Gastrocnemius medialis (tissue), 4 donors: ENCODE measurements at regions of chr9 and their contacts with region 1.

Region 1: GRCh38 chr9:127715394-127716337 is at the starts of genes PTRH1 and TTC16:
- DNase-seq: peak; percentile 95 to 96
- ATAC-seq: peak; percentile 94 to 96
- H3K4me3 ChIP-seq: peak within 1 kb of the TSS; percentile 74 to 85 (median 78)
- H3K27ac ChIP-seq: peak within 1 kb of the TSS; percentile 84 to 86 (median 84)
- H3K4me1 ChIP-seq: peaks cover 12 to 14% of the 10 kb centered on the region in 2 donors
- H3K27me3 ChIP-seq: no peaks in the 10 kb centered on the region
- CTCF ChIP-seq: no peak
- POLR2A ChIP-seq: peak; percentile 71 to 78
- total RNA-seq, gene PTRH1: 16.9 to 38.6 (median 26.3) TPM
- total RNA-seq, gene TTC16: not detected

Region 2: GRCh38 chr9:127545196-127546124 is 170.2 kb before region 1 on chr9:
- in situ Hi-C with region 1: no loop called
- intact Hi-C with region 1: no loop called
- DNase-seq: no peak
- ATAC-seq: peak in 1 of 2 donors; percentile 13
- H3K4me3 ChIP-seq: no peak overlapping the region
- H3K27ac ChIP-seq: peak overlapping the region; percentile 31 to 53 (median 42)
- H3K4me1 ChIP-seq: peaks cover 20 to 31% of the 10 kb centered on the region in 2 donors
- H3K27me3 ChIP-seq: no peaks in the 10 kb centered on the region
- CTCF ChIP-seq: no peak
- POLR2A ChIP-seq: no peak

Region 3: DNA sequence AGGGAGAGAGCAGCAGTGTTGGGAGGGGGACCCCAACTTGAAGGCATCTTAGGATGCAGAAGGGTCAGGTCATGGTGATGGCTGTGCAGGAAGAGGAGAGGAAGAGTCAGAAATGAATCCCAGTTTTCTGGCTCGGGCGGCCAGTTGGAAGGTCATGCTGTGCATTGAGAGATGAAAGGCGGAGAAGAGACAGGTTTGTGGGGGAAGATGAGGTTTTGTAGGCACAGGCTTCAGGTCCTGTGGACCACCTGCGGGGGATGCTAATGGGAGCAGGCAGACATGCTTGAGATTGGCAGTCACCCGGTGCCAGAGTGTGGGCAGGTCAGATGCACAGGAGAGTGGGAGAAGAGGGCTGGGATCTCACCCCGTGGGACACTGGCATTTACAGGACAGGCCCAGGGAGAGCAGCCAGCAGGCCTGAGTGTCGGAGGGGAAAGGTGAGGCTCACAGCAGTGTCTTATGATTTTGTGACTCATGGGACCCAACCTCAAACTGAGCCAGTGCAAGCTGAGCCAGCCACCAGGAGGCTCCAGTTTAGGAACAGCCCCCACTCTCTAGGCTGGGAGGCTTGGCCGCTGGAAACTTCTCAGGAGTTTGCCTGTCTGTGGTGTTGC is 86.1 kb before region 1 on chr9:
- in situ Hi-C with region 1: no loop called
- intact Hi-C with region 1: no loop called
- DNase-seq: no peak
- ATAC-seq: no peak
- H3K4me3 ChIP-seq: no peak overlapping the region
- H3K27ac ChIP-seq: peak overlapping the region in 1 of 4 donors; percentile 5
- H3K4me1 ChIP-seq: peaks cover 14 to 22% of the 10 kb centered on the region in 2 donors
- H3K27me3 ChIP-seq: no peaks in the 10 kb centered on the region
- CTCF ChIP-seq: no peak
- POLR2A ChIP-seq: no peak

Region 4: GRCh38 chr9:127684576-127684975 is 31.1 kb before region 1 on chr9:
- in situ Hi-C with region 1: no loop called
- intact Hi-C with region 1: loop called (anchors 2 kb)
- DNase-seq: no peak
- ATAC-seq: no peak
- H3K4me3 ChIP-seq: no peak overlapping the region
- H3K27ac ChIP-seq: no peak overlapping the region
- H3K4me1 ChIP-seq: peaks cover 18 to 26% of the 10 kb centered on the region in 2 donors
- H3K27me3 ChIP-seq: no peaks in the 10 kb centered on the region
- CTCF ChIP-seq: no peak
- POLR2A ChIP-seq: no peak

Region 5: GRCh38 chr9:127698985-127699670 is 16.5 kb before region 1 on chr9:
- in situ Hi-C with region 1: no loop called
- intact Hi-C with region 1: loop called (anchors 1 kb)
- DNase-seq: peak; percentile 99
- ATAC-seq: peak; percentile 97 to 98
- H3K4me3 ChIP-seq: peak overlapping the region; percentile 36 to 49 (median 40)
- H3K27ac ChIP-seq: peak overlapping the region; percentile 85 to 96 (median 91)
- H3K4me1 ChIP-seq: peaks cover 13 to 20% of the 10 kb centered on the region in 2 donors
- H3K27me3 ChIP-seq: no peaks in the 10 kb centered on the region
- CTCF ChIP-seq: peak; percentile 43 to 50 (median 47)
- POLR2A ChIP-seq: peak; percentile 58 to 78

Region 6: GRCh38 chr9:127726871-127727270 is 11.2 kb after region 1 on chr9:
- in situ Hi-C with region 1: no loop called
- intact Hi-C with region 1: no loop called
- DNase-seq: no peak
- ATAC-seq: no peak
- H3K4me3 ChIP-seq: no peak overlapping the region
- H3K27ac ChIP-seq: no peak overlapping the region
- H3K4me1 ChIP-seq: no peaks in the 10 kb centered on the region
- H3K27me3 ChIP-seq: no peaks in the 10 kb centered on the region
- CTCF ChIP-seq: no peak
- POLR2A ChIP-seq: no peak

Region 7: DNA sequence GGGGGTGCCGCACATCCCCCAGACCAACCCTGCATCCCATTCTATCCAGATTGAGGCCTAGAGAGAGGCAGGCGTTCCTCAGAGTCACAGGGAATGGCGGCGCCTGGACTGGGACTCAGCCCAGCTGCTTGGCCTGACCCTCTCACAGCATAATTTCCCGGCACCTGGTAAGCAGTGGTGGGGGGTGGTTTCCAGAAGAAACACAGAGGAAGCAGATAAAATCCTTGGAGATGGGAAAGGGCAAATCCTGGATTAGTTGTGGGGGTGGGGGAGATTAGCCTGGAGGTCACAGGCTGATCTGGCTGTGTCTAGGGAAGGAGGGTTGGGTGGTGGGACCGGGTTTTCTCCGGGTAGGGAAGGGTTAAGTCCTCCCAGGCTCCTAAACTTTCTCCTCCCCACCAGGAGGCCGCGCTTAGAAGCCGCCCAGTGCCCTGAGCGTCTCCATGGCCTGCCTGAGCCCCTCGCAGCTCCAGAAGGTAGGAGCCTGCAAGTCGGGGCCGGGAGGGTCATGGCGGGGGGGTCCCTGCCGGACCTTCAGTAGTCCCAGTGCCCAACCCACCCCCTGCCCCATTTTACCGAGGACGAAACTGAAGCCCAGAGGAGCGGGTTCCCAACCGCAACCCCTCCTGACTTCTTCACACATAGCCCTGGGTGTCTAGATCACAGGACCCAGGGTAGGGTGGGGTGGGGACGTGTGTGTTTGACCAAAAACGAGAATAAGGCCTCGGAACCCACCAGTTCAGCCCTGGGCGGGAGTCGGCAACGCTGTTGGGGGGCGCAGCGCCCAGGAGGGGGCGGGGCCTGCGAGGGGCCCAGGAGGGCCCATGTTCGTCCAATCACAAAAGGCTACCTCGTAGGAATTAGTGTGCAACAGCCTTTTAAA is 1206.5 kb after region 1 on chr9:
- in situ Hi-C with region 1: no loop called
- intact Hi-C with region 1: no loop called
- DNase-seq: peak; percentile 30 to 37
- ATAC-seq: peak; percentile 11 to 39
- H3K4me3 ChIP-seq: peak overlapping the region; percentile 42 to 63 (median 54)
- H3K27ac ChIP-seq: peak overlapping the region; percentile 81 to 85 (median 83)
- H3K4me1 ChIP-seq: peaks cover 44 to 47% of the 10 kb centered on the region in 2 donors
- H3K27me3 ChIP-seq: no peaks in the 10 kb centered on the region
- CTCF ChIP-seq: peak in 1 of 5 experiments; percentile 17
- POLR2A ChIP-seq: no peak